HepG2 (cell line): ENCODE measurements at regions of chr7 and their contacts with region 1.

Region 1: GRCh38 chr7:158495786-158496185 is 91.8 kb downstream of the PTPRN2 start:
- DNase-seq: peak; percentile 14
- ATAC-seq: peak; percentile 35
- H3K4me3 ChIP-seq: no peak overlapping the region
- H3K27ac ChIP-seq: no peak overlapping the region
- H3K4me1 ChIP-seq: peaks cover 37% of the 10 kb centered on the region
- H3K27me3 ChIP-seq: no peaks in the 10 kb centered on the region
- CTCF ChIP-seq: peak; percentile 70
- EP300 ChIP-seq: no peak
- POLR2A ChIP-seq: no peak
- RAD21 ChIP-seq: peak; percentile 31; the same call in 1 of the 2 replicates

Region 2: GRCh38 chr7:158431941-158432347 is 63.8 kb before region 1 on chr7:
- CTCF ChIA-PET with region 1: no interaction called
- POLR2A ChIA-PET with region 1: no interaction called
- in situ Hi-C with region 1: no loop called
- intact Hi-C with region 1: loop called (anchors 10 kb)
- DNase-seq: peak; percentile 28
- ATAC-seq: peak; percentile 31
- H3K4me3 ChIP-seq: peak overlapping the region; percentile 1 to 47 (median 39); a peak in 3 of 6 replicates
- H3K27ac ChIP-seq: peak overlapping the region; percentile 72
- H3K4me1 ChIP-seq: peaks cover 33% of the 10 kb centered on the region
- H3K27me3 ChIP-seq: no peaks in the 10 kb centered on the region
- CTCF ChIP-seq: no peak
- EP300 ChIP-seq: no peak
- POLR2A ChIP-seq: no peak
- RAD21 ChIP-seq: no peak

Region 3: GRCh38 chr7:158581440-158582088 is 85.8 kb after region 1 on chr7:
- CTCF ChIA-PET with region 1: no interaction called
- POLR2A ChIA-PET with region 1: interaction called, 3 read pairs
- in situ Hi-C with region 1: no loop called
- intact Hi-C with region 1: loop called (anchors 5 kb)
- DNase-seq: peak; percentile 80
- ATAC-seq: peak; percentile 73
- H3K4me3 ChIP-seq: peak overlapping the region in 2 of 3 experiments; percentile 29 to 30; a peak in 2 of 6 replicates
- H3K27ac ChIP-seq: peak overlapping the region; percentile 89
- H3K4me1 ChIP-seq: peaks cover 95% of the 10 kb centered on the region
- H3K27me3 ChIP-seq: no peaks in the 10 kb centered on the region; a peak in 1 of 5 replicates
- CTCF ChIP-seq: no peak
- EP300 ChIP-seq: peak in 1 of 2 experiments; percentile 84; a peak in 2 of 4 replicates
- POLR2A ChIP-seq: peak in 1 of 2 experiments; percentile 43; a peak in 1 of 4 replicates
- RAD21 ChIP-seq: no peak

Region 4: DNA sequence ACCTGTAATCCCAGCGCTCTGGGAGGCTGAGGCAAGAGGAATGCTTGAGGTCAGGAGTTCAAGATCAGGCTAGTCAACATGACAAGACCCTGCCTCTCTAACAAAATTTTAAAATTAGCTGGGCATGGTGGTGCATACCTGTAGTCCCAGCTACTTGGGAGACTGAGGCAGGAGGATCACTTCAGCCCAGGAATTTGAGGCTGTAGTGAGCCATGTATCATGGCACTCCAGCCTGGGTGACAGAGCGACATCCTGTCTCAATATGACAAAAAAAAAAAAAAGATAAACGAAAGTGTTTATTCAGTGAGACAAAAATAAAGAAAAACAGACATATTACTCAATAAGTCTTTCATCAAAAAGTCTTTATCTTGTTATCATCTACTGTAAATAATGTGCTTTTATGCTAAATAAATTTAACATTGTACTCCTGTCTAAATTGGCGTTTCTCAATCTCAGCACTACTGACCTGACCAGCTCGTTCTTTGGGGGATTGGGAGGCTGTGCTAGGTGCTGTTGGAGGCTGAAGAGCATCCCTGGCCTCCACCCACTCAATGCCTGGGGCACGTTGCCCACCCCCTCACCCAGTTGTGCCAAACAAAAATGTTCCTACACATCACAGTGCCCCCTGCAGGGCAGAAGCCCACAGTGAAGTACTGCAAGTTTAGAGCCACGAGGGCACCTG is 151.1 kb after region 1 on chr7:
- CTCF ChIA-PET with region 1: no interaction called
- POLR2A ChIA-PET with region 1: no interaction called
- in situ Hi-C with region 1: no loop called
- intact Hi-C with region 1: loop called (anchors 5 kb)
- DNase-seq: peak; percentile 39
- ATAC-seq: peak; percentile 85
- H3K4me3 ChIP-seq: no peak overlapping the region
- H3K27ac ChIP-seq: no peak overlapping the region
- H3K4me1 ChIP-seq: peaks cover 48% of the 10 kb centered on the region
- H3K27me3 ChIP-seq: no peaks in the 10 kb centered on the region
- CTCF ChIP-seq: peak; percentile 76
- EP300 ChIP-seq: peak in 1 of 2 experiments; percentile 50; a peak in 1 of 4 replicates
- POLR2A ChIP-seq: no peak
- RAD21 ChIP-seq: peak; percentile 66

Region 5: GRCh38 chr7:158760936-158761335 is 265.1 kb after region 1 on chr7:
- CTCF ChIA-PET with region 1: no interaction called
- POLR2A ChIA-PET with region 1: no interaction called
- in situ Hi-C with region 1: no loop called
- intact Hi-C with region 1: loop called (anchors 10 kb)
- DNase-seq: peak; percentile 15
- ATAC-seq: peak; percentile 71
- H3K4me3 ChIP-seq: no peak overlapping the region
- H3K27ac ChIP-seq: no peak overlapping the region
- H3K4me1 ChIP-seq: no peaks in the 10 kb centered on the region
- H3K27me3 ChIP-seq: no peaks in the 10 kb centered on the region
- CTCF ChIP-seq: peak; percentile 46
- EP300 ChIP-seq: no peak
- POLR2A ChIP-seq: no peak
- RAD21 ChIP-seq: no peak